GM12878 (cell line): ENCODE measurements at regions of chr12 and their contacts with region 1.

Region 1: DNA sequence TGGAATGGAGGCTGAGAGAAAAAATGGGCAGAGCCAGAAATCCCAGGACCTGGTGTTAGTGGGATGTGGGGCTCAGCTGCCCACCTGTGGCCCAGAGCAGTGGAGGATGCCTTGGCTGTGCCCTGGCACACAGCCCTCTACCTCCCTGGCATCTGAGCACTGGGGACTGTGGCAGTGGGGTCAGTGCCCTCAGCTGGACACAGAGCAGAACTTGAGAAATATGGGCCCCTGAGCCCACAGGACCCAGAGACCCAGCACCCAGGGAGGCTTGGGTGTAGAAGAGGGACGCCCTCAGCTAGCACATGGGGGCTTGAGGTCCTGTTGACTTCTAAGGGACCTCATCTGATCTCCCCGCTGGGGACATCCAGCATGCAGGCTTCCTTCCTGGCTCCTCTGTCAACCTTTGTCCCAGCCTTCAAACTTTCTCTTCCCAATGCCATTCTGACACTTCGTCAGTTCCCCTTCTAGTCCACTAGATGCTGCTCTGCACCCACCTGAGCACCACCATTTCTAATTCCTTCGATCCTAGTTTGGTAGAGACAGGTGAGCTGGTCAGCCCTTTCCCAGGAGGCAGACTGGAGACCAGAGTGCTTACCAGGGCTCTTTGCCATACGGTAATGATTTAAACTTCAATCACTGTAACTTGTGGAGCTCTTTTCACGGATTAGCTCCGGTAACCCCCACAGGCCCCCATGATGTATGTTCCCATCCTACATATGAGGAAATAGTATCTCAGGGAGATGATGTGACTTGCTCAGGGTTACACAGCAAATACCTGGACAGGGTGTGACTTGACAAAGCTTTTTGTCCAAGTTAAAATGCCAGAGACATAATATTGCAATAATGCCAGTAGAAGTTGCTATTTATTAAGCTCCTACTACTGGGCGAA is 143.7 kb downstream of the ASCL4 start:
- DNase-seq: no peak
- ATAC-seq: peak; percentile 85
- H3K4me3 ChIP-seq: no peak overlapping the region
- H3K27ac ChIP-seq: no peak overlapping the region
- H3K4me1 ChIP-seq: no peaks in the 10 kb centered on the region
- H3K27me3 ChIP-seq: no peaks in the 10 kb centered on the region; a peak in 1 of 4 replicates
- CTCF ChIP-seq: peak; percentile 82 to 87 (median 84)
- EP300 ChIP-seq: no peak
- POLR2A ChIP-seq: no peak
- RAD21 ChIP-seq: peak; percentile 90

Region 2: DNA sequence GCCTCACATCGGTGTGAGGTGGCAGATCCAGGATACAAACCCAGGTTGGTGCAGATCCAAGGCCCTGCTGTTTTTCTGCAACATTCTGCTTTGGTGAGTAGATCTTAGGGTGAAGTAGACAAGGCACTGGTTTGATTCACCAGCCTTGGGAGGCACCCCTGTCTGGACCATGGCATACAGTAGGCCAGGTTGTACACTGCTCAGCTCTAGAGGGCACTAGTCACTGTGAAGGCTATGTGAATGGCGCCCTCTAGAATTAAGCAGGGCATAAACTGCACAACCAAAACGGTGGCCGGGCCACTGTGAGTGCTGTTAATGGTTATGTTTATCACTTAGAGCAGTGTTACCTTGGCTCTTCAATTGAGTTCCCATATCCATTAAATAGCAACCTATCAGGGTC is 513.2 kb before region 1 on chr12:
- CTCF ChIA-PET with region 1: no interaction called
- POLR2A ChIA-PET with region 1: no interaction called
- RAD21 ChIA-PET with region 1: no interaction called
- SMC1A ChIA-PET with region 1: no interaction called
- in situ Hi-C with region 1: no loop called
- intact Hi-C with region 1: no loop called
- DNase-seq: no peak
- ATAC-seq: peak; percentile 90
- H3K4me3 ChIP-seq: no peak overlapping the region
- H3K27ac ChIP-seq: no peak overlapping the region
- H3K4me1 ChIP-seq: no peaks in the 10 kb centered on the region
- H3K27me3 ChIP-seq: no peaks in the 10 kb centered on the region; a peak in 1 of 4 replicates
- CTCF ChIP-seq: peak; percentile 38 to 62 (median 52); a peak in 5 of 6 replicates
- EP300 ChIP-seq: no peak
- POLR2A ChIP-seq: no peak
- RAD21 ChIP-seq: peak; percentile 44

Region 3: GRCh38 chr12:107801150-107801549 is 117.0 kb before region 1 on chr12:
- CTCF ChIA-PET with region 1: no interaction called
- POLR2A ChIA-PET with region 1: no interaction called
- RAD21 ChIA-PET with region 1: no interaction called
- SMC1A ChIA-PET with region 1: no interaction called
- in situ Hi-C with region 1: no loop called
- intact Hi-C with region 1: no loop called
- DNase-seq: no peak
- ATAC-seq: no peak
- H3K4me3 ChIP-seq: no peak overlapping the region
- H3K27ac ChIP-seq: no peak overlapping the region
- H3K4me1 ChIP-seq: peaks cover 3% of the 10 kb centered on the region; the same call in 1 of the 2 replicates
- H3K27me3 ChIP-seq: no peaks in the 10 kb centered on the region; a peak in 1 of 4 replicates
- CTCF ChIP-seq: no peak
- EP300 ChIP-seq: no peak
- POLR2A ChIP-seq: no peak
- RAD21 ChIP-seq: no peak

Region 4: GRCh38 chr12:107929436-107929835 is 11.3 kb after region 1 on chr12:
- CTCF ChIA-PET with region 1: interaction called, 15 read pairs
- POLR2A ChIA-PET with region 1: no interaction called
- RAD21 ChIA-PET with region 1: interaction called, 3 read pairs
- SMC1A ChIA-PET with region 1: interaction called, 4 read pairs
- in situ Hi-C with region 1: no loop called
- intact Hi-C with region 1: no loop called
- DNase-seq: no peak
- ATAC-seq: peak; percentile 94
- H3K4me3 ChIP-seq: no peak overlapping the region
- H3K27ac ChIP-seq: no peak overlapping the region
- H3K4me1 ChIP-seq: no peaks in the 10 kb centered on the region
- H3K27me3 ChIP-seq: no peaks in the 10 kb centered on the region
- CTCF ChIP-seq: peak; percentile 30 to 55 (median 41); a peak in 4 of 6 replicates
- EP300 ChIP-seq: no peak
- POLR2A ChIP-seq: no peak
- RAD21 ChIP-seq: no peak

Region 5: GRCh38 chr12:108495054-108495453 is 576.9 kb after region 1 on chr12:
- CTCF ChIA-PET with region 1: no interaction called
- POLR2A ChIA-PET with region 1: no interaction called
- RAD21 ChIA-PET with region 1: no interaction called
- SMC1A ChIA-PET with region 1: interaction called, 3 read pairs
- in situ Hi-C with region 1: no loop called
- intact Hi-C with region 1: loop called (anchors 1 kb)
- DNase-seq: no peak
- ATAC-seq: peak; percentile 88
- H3K4me3 ChIP-seq: no peak overlapping the region
- H3K27ac ChIP-seq: no peak overlapping the region
- H3K4me1 ChIP-seq: no peaks in the 10 kb centered on the region; the same call in 1 of the 2 replicates
- H3K27me3 ChIP-seq: no peaks in the 10 kb centered on the region
- CTCF ChIP-seq: peak; percentile 42 to 67 (median 57)
- EP300 ChIP-seq: no peak
- POLR2A ChIP-seq: no peak
- RAD21 ChIP-seq: peak; percentile 68

Region 6: GRCh38 chr12:108605000-108605689 is 687.0 kb after region 1 on chr12:
- CTCF ChIA-PET with region 1: no interaction called
- POLR2A ChIA-PET with region 1: no interaction called
- RAD21 ChIA-PET with region 1: no interaction called
- SMC1A ChIA-PET with region 1: no interaction called
- in situ Hi-C with region 1: no loop called
- intact Hi-C with region 1: loop called (anchors 5 kb)
- DNase-seq: no peak
- ATAC-seq: peak; percentile 32
- H3K4me3 ChIP-seq: no peak overlapping the region
- H3K27ac ChIP-seq: no peak overlapping the region
- H3K4me1 ChIP-seq: peaks cover 12% of the 10 kb centered on the region
- H3K27me3 ChIP-seq: no peaks in the 10 kb centered on the region
- CTCF ChIP-seq: no peak
- EP300 ChIP-seq: no peak
- POLR2A ChIP-seq: no peak
- RAD21 ChIP-seq: no peak